Activated CD4-positive, alpha-beta T cell treated with anti-CD3 and anti-CD28 coated beads, Interleukin-2, amount 10 ng/mL, durations not matched to agents 24 days and 14 days (primary cell): ENCODE measurements at regions of chr10 and their contacts with region 1.

Region 1: DNA sequence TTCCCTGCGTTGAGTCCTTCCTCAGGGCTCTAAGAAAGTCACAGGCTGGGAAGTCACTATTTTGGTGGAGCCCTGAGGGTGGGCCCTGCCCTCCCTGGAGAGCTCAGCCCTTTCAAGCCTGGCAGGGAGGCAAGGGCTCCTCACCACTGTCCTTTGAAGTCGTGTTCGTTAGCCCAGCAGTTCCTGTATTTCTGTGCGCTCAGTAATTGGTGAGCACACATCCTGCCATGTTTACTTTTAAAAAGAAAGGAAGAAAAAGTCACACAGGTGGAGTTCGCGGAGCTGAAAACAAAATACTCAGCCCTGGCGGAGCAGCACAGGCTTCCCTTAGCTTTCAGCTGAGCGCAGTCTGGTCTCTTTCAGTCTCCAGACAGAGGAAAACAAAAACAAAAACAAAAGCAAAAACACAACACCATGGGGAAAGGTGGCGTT is 37.1 kb downstream of the PRKCQ start:
- DNase-seq: peak; percentile 90
- H3K4me3 Mint-ChIP-seq: peak overlapping the region; percentile 87
- H3K27ac Mint-ChIP-seq: peak overlapping the region; percentile 99
- H3K4me1 Mint-ChIP-seq: peaks cover 66% of the 10 kb centered on the region
- H3K27me3 Mint-ChIP-seq: no peaks in the 10 kb centered on the region

Region 2: GRCh38 chr10:6445501-6446316 is 97.3 kb before region 1 on chr10:
- intact Hi-C with region 1: loop called (anchors 2 kb)
- DNase-seq: peak; percentile 86
- H3K4me3 Mint-ChIP-seq: no peak overlapping the region
- H3K27ac Mint-ChIP-seq: peak overlapping the region; percentile 46
- H3K4me1 Mint-ChIP-seq: peaks cover 33% of the 10 kb centered on the region
- H3K27me3 Mint-ChIP-seq: no peaks in the 10 kb centered on the region

Region 3: DNA sequence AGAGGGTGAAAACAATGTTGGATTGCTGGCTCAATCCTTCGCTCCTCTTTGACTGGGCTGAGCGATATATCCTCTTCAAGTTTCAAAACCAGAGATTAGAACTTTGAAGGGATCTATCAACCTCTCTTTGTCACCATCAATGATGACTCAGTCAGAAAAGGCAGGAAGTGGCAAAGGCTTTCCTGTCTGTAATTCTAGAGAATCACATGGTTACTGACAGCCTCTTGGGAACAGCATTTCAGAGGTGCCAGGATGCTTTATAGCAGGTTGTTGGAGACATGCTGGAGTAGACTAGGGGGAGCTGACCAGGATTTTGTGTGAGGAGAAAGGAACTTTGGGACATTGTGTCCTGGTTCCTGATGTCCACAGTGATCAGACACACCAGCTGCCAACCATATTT is 44.2 kb before region 1 on chr10:
- intact Hi-C with region 1: loop called (anchors 1 kb)
- DNase-seq: peak; percentile 89
- H3K4me3 Mint-ChIP-seq: peak overlapping the region; percentile 78
- H3K27ac Mint-ChIP-seq: peak overlapping the region; percentile 84
- H3K4me1 Mint-ChIP-seq: peaks cover 42% of the 10 kb centered on the region
- H3K27me3 Mint-ChIP-seq: no peaks in the 10 kb centered on the region

Region 4: DNA sequence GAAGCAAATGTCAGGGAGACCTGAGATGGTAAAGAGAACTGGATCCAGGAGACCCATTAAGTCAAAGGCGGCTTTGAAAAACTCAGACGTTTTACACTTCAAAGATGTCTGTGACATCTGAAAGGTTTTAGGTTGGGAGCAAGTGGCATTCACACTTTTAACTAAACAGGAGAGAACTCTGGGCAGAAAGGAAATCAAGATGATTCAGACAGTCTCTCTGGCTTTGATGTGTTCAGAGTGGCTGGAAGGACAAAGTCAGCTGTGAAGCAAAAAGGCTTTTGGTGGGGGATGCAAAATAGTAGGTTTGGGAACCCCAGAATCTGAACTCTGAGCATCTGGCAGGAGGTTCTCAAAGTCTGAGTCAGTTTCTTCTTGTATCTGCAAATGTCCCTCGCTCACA is 29.5 kb before region 1 on chr10:
- intact Hi-C with region 1: loop called (anchors 1 kb)
- DNase-seq: peak; percentile 78
- H3K4me3 Mint-ChIP-seq: peak overlapping the region; percentile 75
- H3K27ac Mint-ChIP-seq: peak overlapping the region; percentile 91
- H3K4me1 Mint-ChIP-seq: peaks cover 61% of the 10 kb centered on the region
- H3K27me3 Mint-ChIP-seq: no peaks in the 10 kb centered on the region

Region 5: GRCh38 chr10:6563075-6563474 is 20.1 kb after region 1 on chr10:
- intact Hi-C with region 1: loop called (anchors 1 kb)
- DNase-seq: peak; percentile 85
- H3K4me3 Mint-ChIP-seq: peak overlapping the region; percentile 77
- H3K27ac Mint-ChIP-seq: peak overlapping the region; percentile 82
- H3K4me1 Mint-ChIP-seq: peaks cover 83% of the 10 kb centered on the region
- H3K27me3 Mint-ChIP-seq: no peaks in the 10 kb centered on the region